Right lobe of liver (tissue), 6 donors: ENCODE measurements at regions of chr21 and their contacts with region 1.

Region 1: DNA sequence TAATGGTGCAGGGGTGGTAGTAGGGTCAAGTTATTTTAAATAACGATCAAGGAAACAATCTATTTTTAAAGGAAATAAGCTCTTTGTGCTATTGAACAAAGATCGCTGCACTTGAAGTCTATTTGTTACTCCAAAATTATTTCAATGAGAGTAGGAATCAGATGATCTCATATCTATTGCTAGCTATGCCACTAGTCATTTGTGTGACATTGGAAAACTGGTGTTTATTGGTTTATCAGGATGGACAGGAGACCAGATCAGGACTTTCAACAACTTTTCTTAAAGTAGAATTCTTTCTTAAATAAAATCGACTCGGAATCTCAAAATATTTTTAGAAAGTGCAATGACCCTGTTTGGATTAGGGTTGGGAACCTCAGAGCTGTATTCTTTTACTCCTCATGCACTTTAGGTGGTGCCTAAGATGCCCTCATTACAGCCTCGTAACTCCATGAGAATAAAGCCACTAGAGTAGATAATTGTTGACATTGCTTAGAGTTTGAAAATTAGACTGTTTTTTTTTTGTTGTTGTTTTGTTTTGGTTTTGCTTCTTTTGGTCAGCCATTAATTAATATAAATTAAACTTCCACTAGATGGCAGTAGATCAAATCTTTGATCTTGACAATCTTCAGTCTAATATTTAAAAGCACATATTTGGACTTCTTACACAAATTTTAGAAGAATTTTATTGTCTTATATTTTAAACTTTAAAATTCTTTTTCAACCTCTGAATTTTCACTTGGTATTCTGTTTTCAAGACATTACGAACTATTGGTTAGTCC is 352.4 kb downstream of the USP25 start:
- DNase-seq: no peak
- ATAC-seq: peak; percentile 49 to 77 (median 62)
- H3K4me3 ChIP-seq: peak overlapping the region; percentile 15 to 40 (median 35)
- H3K27ac ChIP-seq: peak overlapping the region; percentile 7 to 43 (median 11)
- H3K4me1 ChIP-seq: no peaks in the 10 kb centered on the region
- H3K27me3 ChIP-seq: no peaks in the 10 kb centered on the region
- CTCF ChIP-seq: peak; percentile 45 to 59 (median 50)
- POLR2A ChIP-seq: no peak

Region 2: DNA sequence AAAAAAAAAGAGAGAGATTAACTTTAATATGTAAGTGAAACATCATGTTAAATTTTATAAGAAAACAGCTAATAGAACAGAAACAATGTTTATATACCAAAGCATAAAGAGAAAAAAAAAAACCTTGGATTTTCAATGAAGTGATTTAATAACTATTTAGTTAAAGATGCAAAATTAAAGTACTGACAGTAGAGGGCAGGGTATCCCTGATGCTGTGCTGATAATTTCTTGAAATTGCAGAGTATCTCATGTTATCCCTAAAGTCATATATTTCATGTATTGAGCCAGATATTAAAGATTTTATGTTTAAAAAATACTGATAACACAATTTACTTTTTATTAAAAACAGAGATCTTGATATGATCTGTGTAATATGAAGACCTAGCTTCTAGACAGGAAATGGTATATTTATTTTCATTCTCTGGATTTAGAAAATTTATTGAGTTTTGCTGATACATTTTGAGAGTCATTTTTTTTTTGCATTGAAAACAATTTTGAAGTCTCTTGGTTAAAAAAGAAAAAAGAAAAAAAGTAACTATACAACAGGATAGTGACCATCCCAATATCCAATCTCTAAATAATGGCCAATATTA is 79.3 kb before region 1 on chr21:
- intact Hi-C with region 1: no loop called
- DNase-seq: no peak
- ATAC-seq: peak in 1 of 4 donors; percentile 32
- H3K4me3 ChIP-seq: no peak overlapping the region
- H3K27ac ChIP-seq: no peak overlapping the region
- H3K4me1 ChIP-seq: no peaks in the 10 kb centered on the region
- H3K27me3 ChIP-seq: no peaks in the 10 kb centered on the region
- CTCF ChIP-seq: peak; percentile 23 to 43 (median 40)
- POLR2A ChIP-seq: no peak

Region 3: DNA sequence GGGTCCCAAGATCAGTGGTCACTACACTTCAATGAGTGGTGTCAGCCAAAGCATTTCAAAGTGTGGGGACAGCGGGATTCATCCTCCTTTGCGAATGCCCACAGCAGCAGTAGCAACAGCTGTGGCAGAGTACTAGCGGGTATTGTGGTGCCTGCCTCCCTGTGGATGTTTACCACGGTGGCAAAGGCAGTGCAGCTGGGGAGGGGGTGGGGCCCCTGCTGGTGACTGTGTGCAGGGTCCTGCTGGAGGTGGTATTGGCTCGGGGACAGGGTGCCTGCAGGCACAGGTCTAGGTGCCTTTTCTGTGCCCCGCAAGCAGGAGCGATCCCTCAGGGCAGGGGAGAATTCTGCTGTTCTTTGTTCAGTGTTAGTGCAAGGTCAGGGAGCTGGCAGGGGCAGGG is 63.3 kb after region 1 on chr21:
- intact Hi-C with region 1: no loop called
- DNase-seq: no peak
- ATAC-seq: no peak
- H3K4me3 ChIP-seq: no peak overlapping the region
- H3K27ac ChIP-seq: no peak overlapping the region
- H3K4me1 ChIP-seq: no peaks in the 10 kb centered on the region
- H3K27me3 ChIP-seq: no peaks in the 10 kb centered on the region
- CTCF ChIP-seq: no peak
- POLR2A ChIP-seq: no peak

Region 4: DNA sequence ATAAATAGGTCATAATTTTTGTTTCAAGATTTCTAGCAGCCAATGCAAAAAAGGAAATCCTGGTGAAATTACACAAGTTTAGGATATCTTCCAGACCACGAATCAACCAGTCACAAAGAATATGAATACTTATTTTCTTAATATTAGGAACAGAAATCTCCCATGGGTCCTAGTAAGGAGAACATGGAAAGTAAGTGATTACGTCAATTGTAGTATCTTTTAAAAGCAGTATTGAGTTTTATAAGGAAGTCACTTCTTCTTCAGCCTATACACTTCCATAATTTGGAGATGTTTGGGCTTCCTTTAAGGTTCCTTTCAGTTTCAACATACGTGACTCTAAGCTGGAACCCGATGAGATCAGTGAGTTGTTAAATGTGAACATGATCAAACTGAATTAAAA is 182.1 kb after region 1 on chr21:
- intact Hi-C with region 1: no loop called
- DNase-seq: no peak
- ATAC-seq: peak in 2 of 4 donors; percentile 49 to 52
- H3K4me3 ChIP-seq: no peak overlapping the region
- H3K27ac ChIP-seq: no peak overlapping the region
- H3K4me1 ChIP-seq: no peaks in the 10 kb centered on the region
- H3K27me3 ChIP-seq: no peaks in the 10 kb centered on the region
- CTCF ChIP-seq: no peak
- POLR2A ChIP-seq: no peak

Region 5: GRCh38 chr21:16330082-16330907 is 248.1 kb after region 1 on chr21:
- intact Hi-C with region 1: loop called in 1 of 2 experiments (anchors 10 kb)
- DNase-seq: no peak
- ATAC-seq: peak; percentile 99 to 100 (median 100)
- H3K4me3 ChIP-seq: no peak overlapping the region
- H3K27ac ChIP-seq: no peak overlapping the region
- H3K4me1 ChIP-seq: peaks cover 0 to 3% (median 0%) of the 10 kb centered on the region in 4 donors
- H3K27me3 ChIP-seq: no peaks in the 10 kb centered on the region
- CTCF ChIP-seq: peak; percentile 74 to 85 (median 78)
- POLR2A ChIP-seq: no peak